Caco-2 (cell line): ENCODE measurements at regions of chr19 and their contacts with region 1.

Region 1: DNA sequence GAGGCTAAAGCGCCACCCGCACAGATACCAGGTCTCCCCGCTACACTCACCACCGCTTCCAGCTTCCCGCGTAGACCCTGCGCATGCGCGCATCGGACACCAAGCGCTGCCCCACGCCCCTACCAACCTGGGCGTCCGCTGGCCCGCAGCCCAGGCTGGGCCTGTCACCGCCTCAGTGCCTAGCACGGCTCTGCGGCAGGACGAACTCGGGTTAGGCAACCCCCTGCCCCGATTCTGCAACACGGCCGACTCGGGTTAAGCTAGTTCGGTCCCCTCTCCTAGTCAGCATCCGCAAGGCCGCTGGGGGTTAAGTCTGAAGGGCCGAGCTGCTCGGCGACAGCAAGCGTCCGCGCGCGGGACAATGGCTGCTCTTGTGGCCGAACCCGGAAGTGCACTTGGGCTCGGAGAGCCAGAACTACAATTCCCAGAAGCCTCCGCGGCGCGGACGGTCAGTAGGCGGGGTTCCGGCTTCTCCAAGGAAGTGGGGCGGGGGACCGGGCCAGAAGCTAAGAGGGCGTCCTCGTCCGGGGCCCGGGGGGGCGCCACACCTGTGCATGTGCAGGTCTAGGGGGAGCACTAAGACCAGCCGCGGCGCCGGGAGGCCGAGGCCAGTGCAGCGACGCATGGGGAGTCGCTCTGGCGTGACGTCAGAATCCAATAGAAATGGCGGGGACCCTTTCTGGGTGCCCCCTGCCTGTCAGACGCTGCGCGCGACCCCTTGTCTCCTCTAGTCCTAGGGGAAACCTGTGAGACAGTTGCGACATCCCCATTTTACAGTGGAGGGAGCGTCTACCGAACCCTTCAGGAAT is at the start of gene ZNF180:
- DNase-seq: peak; percentile 98 to 99
- H3K4me3 ChIP-seq: peak within 1 kb of the TSS; percentile 99
- H3K4me3 Mint-ChIP-seq: peak within 1 kb of the TSS; percentile 98
- H3K27ac Mint-ChIP-seq: peak within 1 kb of the TSS; percentile 92
- H3K4me1 ChIP-seq: peaks cover 8% of the 10 kb centered on the region; the same call in 1 of the 2 replicates
- H3K4me1 Mint-ChIP-seq: peaks cover 25% of the 10 kb centered on the region
- H3K27me3 ChIP-seq: no peaks in the 10 kb centered on the region
- H3K27me3 Mint-ChIP-seq: peaks cover 4% of the 10 kb centered on the region
- CTCF ChIP-seq: peak; percentile 38 to 83
- total RNA-seq, gene ZNF180: 9.1 and 13.3 TPM in 2 replicates

Region 2: GRCh38 chr19:44435481-44435880 is 64.9 kb before region 1 on chr19:
- CTCF ChIA-PET with region 1: no interaction called
- POLR2A ChIA-PET with region 1: no interaction called
- intact Hi-C with region 1: loop called (anchors 1 kb)
- DNase-seq: peak in 1 of 2 experiments; percentile 57
- H3K4me3 ChIP-seq: no peak overlapping the region
- H3K4me3 Mint-ChIP-seq: peak overlapping the region; percentile 48
- H3K27ac Mint-ChIP-seq: peak overlapping the region; percentile 79
- H3K4me1 ChIP-seq: peaks cover 15% of the 10 kb centered on the region
- H3K4me1 Mint-ChIP-seq: peaks cover 12% of the 10 kb centered on the region
- H3K27me3 ChIP-seq: no peaks in the 10 kb centered on the region
- H3K27me3 Mint-ChIP-seq: no peaks in the 10 kb centered on the region
- CTCF ChIP-seq: no peak